ENCODE measurements at regions of chr9 and their contacts with region 1.

Region 1: DNA sequence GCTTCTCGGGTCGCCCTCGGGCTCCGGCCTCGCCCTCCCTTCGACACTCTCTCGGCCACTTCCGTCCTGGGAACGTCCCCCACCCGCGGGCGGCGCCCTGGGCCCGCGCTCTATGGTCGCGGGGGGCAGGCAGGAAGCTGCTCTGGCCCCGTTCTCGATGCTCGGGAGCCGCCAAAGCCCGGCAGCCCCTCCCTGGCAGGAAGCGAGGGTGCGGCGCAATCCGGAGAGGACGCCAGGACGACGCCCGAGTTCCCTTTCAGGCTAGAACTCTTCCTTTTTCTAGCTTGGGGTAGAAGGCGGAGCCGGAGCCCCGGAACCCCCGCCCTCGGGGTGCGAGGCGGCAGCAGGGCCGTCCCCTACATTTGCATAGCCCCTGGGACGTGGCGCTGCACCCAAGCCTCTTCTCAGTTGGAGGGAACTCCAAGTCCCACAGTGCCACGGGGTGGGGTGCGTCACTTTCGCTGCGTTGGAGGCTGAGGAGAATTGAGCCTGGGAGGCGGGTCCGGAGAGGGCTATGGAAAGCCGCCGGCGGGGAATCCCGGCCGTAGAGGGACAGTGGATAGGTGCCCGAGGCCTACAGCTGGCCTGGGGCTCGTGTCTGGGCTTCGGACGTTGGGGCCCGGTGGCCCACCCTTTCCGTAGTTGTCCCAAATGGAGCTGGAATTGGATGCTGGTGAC is at the starts of genes CREB3 and TLN1:
- DNase-seq: peak; percentile 97
- ATAC-seq: peak; percentile 81 to 85
- H3K4me3 ChIP-seq: peak within 1 kb of the TSS; percentile 68 to 94 (median 87)
- H3K27ac ChIP-seq: peak within 1 kb of the TSS; percentile 88 to 98 (median 92)
- H3K4me1 ChIP-seq: peaks cover 51 to 55% of the 10 kb centered on the region in 2 donors
- H3K27me3 ChIP-seq: no peaks in the 10 kb centered on the region
- CTCF ChIP-seq: no peak
- POLR2A ChIP-seq: peak; percentile 75 to 92
- total RNA-seq, gene CREB3: 17.8 to 39.6 (median 26.2) TPM
- total RNA-seq, gene TLN1: 106 to 256 (median 186) TPM

Region 2: GRCh38 chr9:35448496-35448895 is 283.8 kb before region 1 on chr9:
- in situ Hi-C with region 1: no loop called
- intact Hi-C with region 1: no loop called
- DNase-seq: no peak
- ATAC-seq: no peak
- H3K4me3 ChIP-seq: no peak overlapping the region
- H3K27ac ChIP-seq: no peak overlapping the region
- H3K4me1 ChIP-seq: no peaks in the 10 kb centered on the region
- H3K27me3 ChIP-seq: no peaks in the 10 kb centered on the region
- CTCF ChIP-seq: no peak
- POLR2A ChIP-seq: no peak

Region 3: GRCh38 chr9:35489313-35490154 is 242.7 kb before region 1 on chr9 and contains the start of gene RUSC2:
- in situ Hi-C with region 1: loop called in 1 of 4 experiments (anchors 25 kb)
- intact Hi-C with region 1: loop called (anchors 10 kb)
- DNase-seq: peak; percentile 72 to 88
- ATAC-seq: peak; percentile 56 to 71
- H3K4me3 ChIP-seq: peak within 1 kb of the TSS; percentile 79 to 89 (median 88)
- H3K27ac ChIP-seq: peak within 1 kb of the TSS; percentile 91 to 97 (median 96)
- H3K4me1 ChIP-seq: peaks cover 31% of the 10 kb centered on the region in 2 donors
- H3K27me3 ChIP-seq: no peaks in the 10 kb centered on the region
- CTCF ChIP-seq: peak; percentile 52 to 83 (median 61)
- POLR2A ChIP-seq: peak; percentile 86 to 88
- total RNA-seq, gene RUSC2: 20.8 to 166 (median 45.7) TPM

Region 4: DNA sequence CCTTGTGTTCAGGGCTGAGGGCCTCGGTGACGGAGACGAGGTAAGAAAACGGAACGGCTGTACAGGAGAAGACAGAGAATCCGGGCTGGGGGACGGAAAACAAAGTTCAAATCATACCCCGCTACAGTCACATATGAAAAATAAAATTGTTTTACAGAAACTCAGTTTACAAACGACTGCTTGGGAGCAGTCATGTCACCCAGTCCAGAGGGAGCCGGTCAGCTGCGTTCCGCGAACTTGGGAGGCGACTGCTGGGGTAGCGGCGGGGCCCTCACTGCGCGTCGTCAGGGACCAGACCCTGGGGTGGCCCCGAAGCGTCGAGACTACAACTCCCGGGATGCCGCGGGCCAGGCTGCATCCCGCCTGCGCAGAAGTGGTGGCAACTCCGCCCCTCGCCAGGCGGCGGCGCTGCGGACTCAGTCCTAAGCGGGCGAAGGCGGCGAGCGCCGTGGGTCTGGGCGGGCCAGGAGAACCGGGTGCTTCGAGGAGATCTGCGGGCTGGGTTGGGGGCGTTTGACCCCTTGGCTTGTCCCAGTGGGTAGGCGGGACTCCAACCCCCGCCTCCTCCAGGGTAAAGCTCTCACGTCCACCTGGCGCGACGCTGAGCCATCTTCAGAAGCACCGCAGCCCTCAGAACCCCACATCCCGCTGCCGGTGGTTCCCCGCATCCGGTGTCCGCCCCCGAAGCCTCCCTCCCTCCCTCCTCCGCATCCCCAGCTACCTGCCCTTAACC is 85.6 kb before region 1 on chr9:
- in situ Hi-C with region 1: no loop called
- intact Hi-C with region 1: loop called (anchors 1 kb)
- DNase-seq: peak; percentile 84 to 88
- ATAC-seq: peak; percentile 90 to 94
- H3K4me3 ChIP-seq: peak overlapping the region; percentile 66 to 75 (median 70)
- H3K27ac ChIP-seq: peak overlapping the region; percentile 83 to 91 (median 88)
- H3K4me1 ChIP-seq: peaks cover 11% of the 10 kb centered on the region in 2 donors
- H3K27me3 ChIP-seq: no peaks in the 10 kb centered on the region
- CTCF ChIP-seq: peak; percentile 96 to 99 (median 98)
- POLR2A ChIP-seq: peak; percentile 74 to 81

Region 5: DNA sequence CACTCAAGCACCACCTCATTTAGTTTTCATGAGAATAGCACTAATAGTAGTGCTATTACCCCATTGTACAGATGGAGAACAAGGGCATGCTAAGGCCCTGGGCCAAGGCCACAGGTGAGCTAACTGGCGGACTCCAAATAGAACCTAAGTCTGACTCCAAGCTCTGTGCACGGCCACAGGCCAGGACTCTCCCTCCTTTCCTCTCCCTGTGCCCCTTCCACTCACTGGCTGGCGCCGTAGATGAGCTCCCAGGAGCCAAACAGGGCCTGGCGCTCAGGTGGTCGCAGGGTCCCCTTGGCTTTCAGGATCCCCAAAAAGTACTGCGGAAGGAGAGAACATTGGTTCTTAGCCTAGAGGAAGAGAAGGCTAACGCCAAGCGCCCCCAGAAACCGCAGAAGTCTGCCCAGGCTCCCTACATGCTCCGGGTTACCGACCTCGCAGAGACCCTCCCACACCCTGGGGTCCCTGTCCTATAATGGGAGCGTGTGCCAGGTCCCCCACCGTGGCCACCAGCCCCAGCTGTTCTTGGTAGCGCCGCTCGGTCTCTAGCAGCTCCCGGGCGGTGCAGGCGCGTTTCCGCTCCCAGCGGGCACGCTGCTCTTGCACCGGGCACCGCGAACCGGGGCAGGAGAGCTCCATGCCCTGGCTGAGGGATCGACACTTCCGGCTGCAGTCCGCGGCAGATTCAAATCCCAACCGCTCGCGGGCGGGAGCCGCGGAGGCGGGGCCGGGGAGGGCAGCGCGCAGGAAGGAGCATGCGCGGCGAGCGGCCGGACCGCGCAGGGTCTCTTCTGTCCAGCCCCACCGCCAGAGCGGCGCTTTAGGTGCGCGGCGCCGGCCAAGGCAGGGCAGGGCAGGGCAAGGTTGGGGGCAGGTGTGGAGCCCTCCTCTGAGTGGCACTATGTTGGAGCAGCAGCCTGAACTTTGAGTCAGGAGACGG is 67.5 kb before region 1 on chr9 and contains the start of gene ARHGEF39:
- in situ Hi-C with region 1: loop called in 1 of 4 experiments (anchors 10 kb)
- intact Hi-C with region 1: no loop called
- DNase-seq: peak; percentile 47 to 80
- ATAC-seq: peak; percentile 64 to 73
- H3K4me3 ChIP-seq: peak within 1 kb of the TSS; percentile 46 to 70 (median 60)
- H3K27ac ChIP-seq: peak within 1 kb of the TSS; percentile 59 to 65 (median 62)
- H3K4me1 ChIP-seq: peaks cover 16 to 29% of the 10 kb centered on the region in 2 donors
- H3K27me3 ChIP-seq: no peaks in the 10 kb centered on the region
- CTCF ChIP-seq: no peak
- POLR2A ChIP-seq: peak; percentile 15 to 43
- total RNA-seq, gene ARHGEF39: 0.07 to 0.10 TPM in 2 of 4 donors, not detected in the others

Region 6: GRCh38 chr9:35748858-35749514 is 16.7 kb after region 1 on chr9 and contains the starts of genes GBA2 and RGP1:
- in situ Hi-C with region 1: no loop called
- intact Hi-C with region 1: loop called (anchors 1 kb)
- DNase-seq: peak; percentile 71 to 87
- ATAC-seq: peak; percentile 81 to 85
- H3K4me3 ChIP-seq: peak within 1 kb of the TSS; percentile 81 to 99 (median 85)
- H3K27ac ChIP-seq: peak within 1 kb of the TSS; percentile 88 to 97 (median 94)
- H3K4me1 ChIP-seq: peaks cover 41 to 45% of the 10 kb centered on the region in 2 donors
- H3K27me3 ChIP-seq: no peaks in the 10 kb centered on the region
- CTCF ChIP-seq: no peak
- POLR2A ChIP-seq: peak; percentile 88 to 95
- total RNA-seq, gene GBA2: 47.3 to 63.2 (median 51.4) TPM
- total RNA-seq, gene RGP1: 22.0 to 41.1 (median 36.3) TPM

Region 7: DNA sequence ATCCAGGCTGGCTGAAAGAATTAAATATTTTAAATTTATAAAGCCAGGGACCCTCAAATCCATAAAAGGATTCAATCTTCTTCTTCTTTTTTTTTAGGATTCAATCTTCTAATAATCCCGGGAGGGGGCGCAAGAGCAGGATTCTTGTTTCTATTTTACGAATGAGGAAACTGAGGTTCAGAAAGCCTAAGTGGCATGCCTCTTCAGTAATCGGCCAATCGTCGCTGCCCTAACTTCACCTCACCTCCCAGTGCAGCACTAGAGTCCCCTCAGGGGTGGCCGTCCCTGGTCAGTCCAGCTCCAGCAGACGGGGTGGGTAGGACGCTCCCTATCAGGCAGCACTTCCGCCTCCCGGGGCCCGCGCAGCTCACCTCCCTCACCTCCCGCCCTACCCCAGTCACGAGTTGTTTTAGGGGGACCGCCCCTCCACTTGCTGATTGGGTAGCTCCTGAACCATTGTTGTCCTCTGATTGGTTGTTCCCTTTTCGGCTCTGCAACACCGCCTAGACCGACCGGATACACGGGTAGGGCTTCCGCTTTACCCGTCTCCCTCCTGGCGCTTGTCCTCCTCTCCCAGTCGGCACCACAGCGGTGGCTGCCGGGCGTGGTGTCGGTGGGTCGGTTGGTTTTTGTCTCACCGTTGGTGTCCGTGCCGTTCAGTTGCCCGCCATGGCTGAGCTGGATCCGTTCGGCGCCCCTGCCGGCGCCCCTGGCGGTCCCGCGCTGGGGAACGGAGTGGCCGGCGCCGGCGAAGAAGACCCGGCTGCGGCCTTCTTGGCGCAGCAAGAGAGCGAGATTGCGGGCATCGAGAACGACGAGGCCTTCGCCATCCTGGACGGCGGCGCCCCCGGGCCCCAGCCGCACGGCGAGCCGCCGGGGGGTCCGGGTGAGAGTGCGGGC is 458.4 kb after region 1 on chr9 and contains the start of gene CLTA:
- in situ Hi-C with region 1: no loop called
- intact Hi-C with region 1: loop called (anchors 5 kb)
- DNase-seq: peak; percentile 98
- ATAC-seq: peak; percentile 98 to 100
- H3K4me3 ChIP-seq: peak within 1 kb of the TSS; percentile 76 to 92 (median 84)
- H3K27ac ChIP-seq: peak within 1 kb of the TSS; percentile 89 to 97 (median 91)
- H3K4me1 ChIP-seq: peaks cover 31 to 36% of the 10 kb centered on the region in 2 donors
- H3K27me3 ChIP-seq: no peaks in the 10 kb centered on the region
- CTCF ChIP-seq: peak; percentile 36 to 58 (median 40)
- POLR2A ChIP-seq: peak; percentile 94 to 96
- total RNA-seq, gene CLTA: 48.4 to 86.7 (median 69.0) TPM

Measured in gastrocnemius medialis (tissue), 4 donors.